Uterus (tissue), 4 donors: ENCODE measurements at regions of chr3 and their contacts with region 1.

Region 1: DNA sequence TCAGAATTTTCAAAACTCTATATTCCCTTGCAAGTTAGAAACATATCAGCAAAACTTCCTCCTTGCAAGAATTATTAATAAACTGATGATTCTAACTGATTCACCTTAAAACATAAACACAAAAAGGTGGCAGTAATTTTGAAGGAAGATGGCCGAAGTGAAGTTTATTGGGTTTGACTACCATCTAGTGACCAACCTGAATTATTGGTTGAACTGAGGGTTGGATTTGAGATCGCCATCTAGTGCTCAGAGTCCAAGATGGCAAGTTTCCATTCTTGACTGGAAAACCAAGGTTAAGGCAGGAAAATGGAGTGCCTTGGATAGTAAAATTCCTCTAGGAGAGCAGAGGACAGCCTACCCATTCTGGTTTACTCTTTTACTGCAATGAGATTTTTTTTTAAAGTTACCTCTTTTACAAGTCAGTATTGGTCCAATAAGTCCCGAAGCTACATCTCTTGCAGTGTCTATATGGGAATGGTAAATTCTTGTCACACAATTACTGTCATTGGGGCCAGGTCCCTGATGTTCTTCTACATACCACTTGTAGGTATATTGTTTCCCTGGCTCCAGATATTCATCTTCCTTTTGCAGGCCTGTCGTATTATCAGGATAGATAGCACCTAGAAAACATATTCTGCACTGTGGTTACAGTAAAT is 51.6 kb upstream of the CP start:
- DNase-seq: peak; percentile 40 to 69
- H3K4me3 ChIP-seq: no peak overlapping the region
- H3K27ac ChIP-seq: peak overlapping the region; percentile 26 to 31
- H3K4me1 ChIP-seq: no peaks in the 10 kb centered on the region
- H3K27me3 ChIP-seq: no peaks in the 10 kb centered on the region
- CTCF ChIP-seq: peak; percentile 90 to 97 (median 94)
- POLR2A ChIP-seq: no peak

Region 2: GRCh38 chr3:148955544-148956346 is 317.5 kb before region 1 on chr3:
- intact Hi-C with region 1: loop called (anchors 10 kb)
- DNase-seq: peak; percentile 65 to 88
- H3K4me3 ChIP-seq: no peak overlapping the region
- H3K27ac ChIP-seq: peak overlapping the region; percentile 97 to 99
- H3K4me1 ChIP-seq: peaks cover 0 to 10% of the 10 kb centered on the region in 2 donors
- H3K27me3 ChIP-seq: no peaks in the 10 kb centered on the region
- CTCF ChIP-seq: peak; percentile 61 to 72 (median 67)
- POLR2A ChIP-seq: no peak

Region 3: DNA sequence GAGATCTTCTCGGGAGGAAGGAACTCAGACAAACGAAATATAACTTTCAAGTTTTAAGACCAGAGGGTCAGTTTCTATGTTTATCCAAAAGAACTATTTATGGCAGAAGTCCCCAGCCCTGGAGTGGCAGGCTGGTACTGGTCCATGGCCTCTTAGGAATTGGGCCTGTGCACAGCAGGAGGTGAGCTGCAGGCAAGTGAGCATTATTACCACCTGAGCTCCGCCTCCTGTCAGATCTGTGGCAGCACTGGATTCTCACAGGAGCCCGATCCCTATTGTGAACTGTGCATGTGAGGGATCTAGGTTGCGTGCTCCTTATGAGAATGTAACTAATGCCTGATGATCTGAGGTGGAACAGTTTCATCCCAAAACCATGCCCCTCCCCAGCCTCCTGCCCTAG is 158.1 kb before region 1 on chr3:
- intact Hi-C with region 1: loop called (anchors 5 kb)
- DNase-seq: no peak
- H3K4me3 ChIP-seq: no peak overlapping the region
- H3K27ac ChIP-seq: no peak overlapping the region
- H3K4me1 ChIP-seq: no peaks in the 10 kb centered on the region
- H3K27me3 ChIP-seq: no peaks in the 10 kb centered on the region
- CTCF ChIP-seq: no peak
- POLR2A ChIP-seq: no peak

Region 4: GRCh38 chr3:149480325-149481017 is 207.2 kb after region 1 on chr3:
- intact Hi-C with region 1: loop called (anchors 5 kb)
- DNase-seq: peak; percentile 77
- H3K4me3 ChIP-seq: no peak overlapping the region
- H3K27ac ChIP-seq: peak overlapping the region; percentile 72 to 75
- H3K4me1 ChIP-seq: no peaks in the 10 kb centered on the region
- H3K27me3 ChIP-seq: no peaks in the 10 kb centered on the region
- CTCF ChIP-seq: peak; percentile 69 to 79 (median 73)
- POLR2A ChIP-seq: no peak